ENCODE measurements at regions of chr10 and their contacts with region 1.

Region 1: DNA sequence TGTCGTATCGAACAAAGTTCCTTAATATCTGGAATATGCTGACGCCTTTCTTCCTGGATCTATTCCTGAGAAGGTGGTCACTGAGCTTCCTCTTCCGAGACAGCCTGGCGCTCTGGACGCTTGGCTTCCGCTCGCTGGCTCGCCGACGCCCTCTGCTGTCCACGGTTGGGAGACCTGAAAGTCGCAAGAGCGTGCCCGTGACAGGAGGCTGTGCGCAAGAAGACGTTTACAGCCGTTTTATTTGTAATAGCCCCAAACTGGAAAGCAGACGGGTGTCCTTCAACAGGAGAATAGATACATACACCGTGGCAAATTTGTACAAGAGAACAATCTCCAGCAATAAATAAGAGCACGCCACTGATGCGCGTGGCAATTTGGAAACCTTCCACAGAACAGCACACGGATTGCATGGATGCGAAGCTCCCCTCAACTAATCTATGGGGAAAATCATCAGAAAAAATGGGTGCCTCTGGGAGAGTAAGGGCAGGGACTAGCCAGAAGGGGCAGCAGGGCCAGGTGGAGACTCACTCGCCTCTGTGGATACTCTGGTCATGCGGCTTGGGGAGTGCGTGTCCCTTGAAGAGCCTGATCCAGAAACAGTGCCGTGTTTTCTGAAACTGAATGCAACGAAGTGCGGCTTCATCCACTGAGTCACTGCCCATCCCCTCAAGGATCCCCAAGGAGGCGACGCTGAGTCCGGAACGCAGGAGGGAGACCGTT is 41.5 kb upstream of the BNIP3 start:
- DNase-seq: peak; percentile 79
- ATAC-seq: peak; percentile 87
- H3K4me3 Mint-ChIP-seq: no peak overlapping the region
- H3K27ac Mint-ChIP-seq: no peak overlapping the region
- H3K4me1 Mint-ChIP-seq: peaks cover 9% of the 10 kb centered on the region
- H3K27me3 Mint-ChIP-seq: peaks cover 33% of the 10 kb centered on the region

Region 2: DNA sequence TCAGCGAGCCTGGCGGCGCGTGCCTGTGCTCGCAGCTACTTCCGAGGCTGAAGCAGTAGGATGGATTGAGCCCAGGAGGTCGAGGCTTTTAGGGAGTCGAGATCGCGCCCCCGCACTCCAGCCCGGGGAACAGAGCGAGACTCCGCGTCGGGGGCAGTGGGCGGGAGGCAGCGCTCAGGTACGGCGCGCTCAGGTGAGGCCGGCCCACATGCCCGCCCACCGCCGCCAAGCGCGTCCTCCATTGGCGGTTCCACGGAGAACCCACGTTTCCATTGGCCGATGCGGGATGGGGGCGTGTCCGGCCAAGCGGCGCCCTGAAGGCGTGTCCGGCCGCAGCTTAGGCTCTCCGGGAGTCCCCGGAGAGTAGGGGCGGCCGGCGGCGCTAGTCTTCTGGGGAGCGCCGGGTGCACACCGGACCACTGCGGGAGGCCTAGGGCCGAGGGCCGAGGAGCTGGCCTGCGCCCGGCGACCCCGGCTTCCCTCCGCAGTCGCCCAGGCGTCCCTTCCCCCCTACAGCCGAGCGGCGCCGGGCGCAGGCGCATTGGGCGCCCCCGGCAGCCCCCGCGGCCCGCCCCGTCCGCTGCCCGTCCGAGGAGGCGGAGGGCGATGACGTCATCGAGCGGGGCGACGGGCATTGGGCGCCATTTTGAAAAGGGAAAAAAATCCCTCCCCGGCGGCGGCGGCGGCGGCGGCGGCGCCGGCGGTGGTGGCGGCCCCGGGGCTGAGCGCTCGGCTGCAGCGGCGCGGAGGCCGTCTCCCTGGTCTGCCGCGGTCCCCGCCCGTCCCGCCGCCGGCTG is 122.7 kb before region 1 on chr10 and contains the start of gene PPP2R2D:
- CTCF ChIA-PET with region 1: interaction called, 15 read pairs
- DNase-seq: peak; percentile 96
- ATAC-seq: peak; percentile 86
- H3K4me3 Mint-ChIP-seq: peak within 1 kb of the TSS; percentile 82
- H3K27ac Mint-ChIP-seq: peak within 1 kb of the TSS; percentile 85
- H3K4me1 Mint-ChIP-seq: peaks cover 58% of the 10 kb centered on the region
- H3K27me3 Mint-ChIP-seq: peaks cover 13% of the 10 kb centered on the region
- total RNA-seq, gene PPP2R2D: 36.0 to 41.9 TPM

Region 3: GRCh38 chr10:131972474-131973071 is 50.7 kb before region 1 on chr10:
- CTCF ChIA-PET with region 1: interaction called, 12 read pairs
- DNase-seq: peak; percentile 67
- ATAC-seq: peak; percentile 76
- H3K4me3 Mint-ChIP-seq: peak overlapping the region; percentile 65
- H3K27ac Mint-ChIP-seq: peak overlapping the region; percentile 80
- H3K4me1 Mint-ChIP-seq: peaks cover 55% of the 10 kb centered on the region
- H3K27me3 Mint-ChIP-seq: no peaks in the 10 kb centered on the region

Region 4: GRCh38 chr10:132011024-132011423 is 12.2 kb before region 1 on chr10:
- CTCF ChIA-PET with region 1: interaction called, 11 read pairs
- DNase-seq: no peak
- ATAC-seq: no peak
- H3K4me3 Mint-ChIP-seq: no peak overlapping the region
- H3K27ac Mint-ChIP-seq: no peak overlapping the region
- H3K4me1 Mint-ChIP-seq: no peaks in the 10 kb centered on the region
- H3K27me3 Mint-ChIP-seq: peaks cover 30% of the 10 kb centered on the region

Region 5: DNA sequence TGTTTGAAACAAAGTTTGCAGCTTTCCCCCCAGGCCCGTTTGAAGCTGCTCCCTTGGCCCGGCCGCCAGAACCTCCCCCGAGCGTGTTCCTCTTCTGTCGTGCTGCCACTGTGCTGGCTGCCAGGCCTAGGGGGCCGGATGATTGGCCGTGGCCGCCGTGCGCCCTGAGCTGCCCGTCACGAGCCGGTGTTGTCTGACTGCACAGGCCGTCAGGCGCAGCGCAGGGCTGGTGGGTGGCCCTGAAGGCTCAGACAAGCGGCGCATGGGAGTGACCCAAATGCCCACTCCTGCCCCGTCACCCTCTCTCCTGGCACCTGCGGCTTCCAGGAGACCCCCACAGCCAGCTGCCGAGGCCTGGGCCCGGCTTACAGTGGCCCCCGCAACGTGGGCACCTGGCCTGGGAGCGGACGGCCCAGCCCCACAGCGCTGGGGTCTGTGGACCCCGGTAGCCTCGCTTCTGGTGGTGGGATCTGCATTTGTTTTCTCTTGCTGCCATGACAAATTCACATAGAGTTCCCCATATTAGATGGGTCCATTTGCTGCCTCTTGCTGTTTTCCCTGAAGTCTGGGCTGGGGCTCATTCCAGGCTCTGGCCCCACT is 55.6 kb after region 1 on chr10:
- CTCF ChIA-PET with region 1: no interaction called
- DNase-seq: peak; percentile 30
- ATAC-seq: no peak
- H3K4me3 Mint-ChIP-seq: no peak overlapping the region
- H3K27ac Mint-ChIP-seq: no peak overlapping the region
- H3K4me1 Mint-ChIP-seq: no peaks in the 10 kb centered on the region
- H3K27me3 Mint-ChIP-seq: peaks cover 17% of the 10 kb centered on the region